ENCODE measurements at regions of chr12 and their contacts with region 1.

Region 1: GRCh38 chr12:103548622-103549601 is 38.2 kb upstream of the STAB2 start:
- DNase-seq: no peak
- ATAC-seq: peak; percentile 31

Region 2: GRCh38 chr12:102833687-102834445 is 715.0 kb before region 1 on chr12:
- intact Hi-C with region 1: no loop called
- DNase-seq: no peak
- ATAC-seq: no peak

Region 3: GRCh38 chr12:102883204-102883799 is 665.6 kb before region 1 on chr12:
- intact Hi-C with region 1: loop called (anchors 5 kb)
- DNase-seq: no peak
- ATAC-seq: no peak

Region 4: DNA sequence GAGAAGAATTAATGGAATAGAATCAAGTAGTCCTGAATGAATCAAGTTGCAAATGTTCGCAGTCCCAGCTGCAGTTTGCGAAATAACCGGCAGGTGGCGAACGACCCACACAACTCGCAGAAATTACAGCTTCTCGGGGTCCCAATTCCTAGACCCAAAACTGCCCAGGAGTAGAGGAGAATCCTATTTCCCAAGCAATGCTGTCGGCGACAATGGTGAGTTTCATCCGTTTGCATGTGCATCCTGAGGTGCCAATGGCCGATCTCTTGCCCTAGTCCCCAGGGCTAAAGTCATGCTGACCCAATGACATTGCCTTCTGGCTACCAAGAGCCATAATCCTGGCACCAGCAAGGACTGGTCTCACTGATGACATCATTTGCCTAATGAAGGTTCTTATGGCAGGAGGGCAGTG is 600.0 kb before region 1 on chr12:
- intact Hi-C with region 1: loop called (anchors 5 kb)
- DNase-seq: no peak
- ATAC-seq: no peak

Region 5: GRCh38 chr12:103596981-103597380 is 48.1 kb after region 1 on chr12:
- intact Hi-C with region 1: no loop called
- DNase-seq: no peak
- ATAC-seq: no peak

Measured in Right ventricle myocardium inferior (tissue), 1 donor.